Panc1 (cell line): ENCODE measurements at regions of chr1 and their contacts with region 1.

Region 1: DNA sequence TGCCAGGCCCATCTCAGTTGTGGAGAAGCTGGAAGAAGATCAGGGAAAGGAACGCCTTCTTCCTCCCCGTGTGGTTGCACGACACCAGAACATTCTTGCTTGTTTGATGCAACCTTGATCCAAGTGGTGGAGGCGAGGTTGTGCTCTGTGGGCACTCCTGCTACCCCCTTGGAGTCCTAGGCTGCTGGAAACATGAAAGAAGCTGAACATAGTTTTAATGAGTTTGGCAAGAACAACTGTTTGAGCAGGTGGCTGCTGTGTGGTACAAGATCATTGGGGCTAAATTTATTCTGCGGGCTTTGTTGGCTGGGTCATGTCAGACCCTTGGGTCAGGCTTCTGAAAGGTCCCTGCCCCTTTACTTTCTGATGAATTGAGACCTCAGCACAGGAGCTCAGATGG is 5.9 kb downstream of the KAZN start:
- DNase-seq: no peak
- ATAC-seq: no peak
- H3K4me3 ChIP-seq: no peak overlapping the region
- H3K27ac ChIP-seq: no peak overlapping the region
- H3K4me1 ChIP-seq: peaks cover 1% of the 10 kb centered on the region
- H3K27me3 ChIP-seq: peaks cover 33% of the 10 kb centered on the region
- CTCF ChIP-seq: no peak

Region 2: GRCh38 chr1:14156543-14156942 is 447.9 kb before region 1 on chr1:
- CTCF ChIA-PET with region 1: no interaction called
- POLR2A ChIA-PET with region 1: interaction called, 15 read pairs
- in situ Hi-C with region 1: no loop called
- intact Hi-C with region 1: no loop called
- DNase-seq: no peak
- ATAC-seq: no peak
- H3K4me3 ChIP-seq: no peak overlapping the region
- H3K27ac ChIP-seq: no peak overlapping the region
- H3K4me1 ChIP-seq: no peaks in the 10 kb centered on the region
- H3K27me3 ChIP-seq: no peaks in the 10 kb centered on the region
- CTCF ChIP-seq: no peak